Activated T-helper 1 cell treated with anti-CD3 and anti-CD28 coated beads, Interleukin-12 subunit alpha, Interleukin-12 subunit beta, Interleukin-2, Interleukin-4 antibody, amounts not matched to agents 30 ng/mL and 10 ng/mL and 1 ng/mL, durations not matched to agents 14 hours and 24 hours and 36 hours (primary cell): ENCODE measurements at regions of chr11 and their contacts with region 1.

Region 1: GRCh38 chr11:17354601-17354991 is 3.0 kb downstream of the NCR3LG1 start:
- DNase-seq: peak; percentile 56
- H3K4me3 Mint-ChIP-seq: peak overlapping the region; percentile 73
- H3K27ac Mint-ChIP-seq: peak overlapping the region; percentile 73
- H3K4me1 Mint-ChIP-seq: peaks cover 40% of the 10 kb centered on the region
- H3K27me3 Mint-ChIP-seq: peaks cover 43% of the 10 kb centered on the region

Region 2: GRCh38 chr11:17207317-17208258 is 147.0 kb before region 1 on chr11 and contains the start of gene PIK3C2A:
- intact Hi-C with region 1: loop called (anchors 1 kb)
- DNase-seq: peak; percentile 93
- H3K4me3 Mint-ChIP-seq: peak within 1 kb of the TSS; percentile 98
- H3K27ac Mint-ChIP-seq: peak within 1 kb of the TSS; percentile 94
- H3K4me1 Mint-ChIP-seq: peaks cover 35% of the 10 kb centered on the region
- H3K27me3 Mint-ChIP-seq: no peaks in the 10 kb centered on the region
- total RNA-seq, gene PIK3C2A: 31.7 and 31.8 TPM in 2 replicates

Region 3: DNA sequence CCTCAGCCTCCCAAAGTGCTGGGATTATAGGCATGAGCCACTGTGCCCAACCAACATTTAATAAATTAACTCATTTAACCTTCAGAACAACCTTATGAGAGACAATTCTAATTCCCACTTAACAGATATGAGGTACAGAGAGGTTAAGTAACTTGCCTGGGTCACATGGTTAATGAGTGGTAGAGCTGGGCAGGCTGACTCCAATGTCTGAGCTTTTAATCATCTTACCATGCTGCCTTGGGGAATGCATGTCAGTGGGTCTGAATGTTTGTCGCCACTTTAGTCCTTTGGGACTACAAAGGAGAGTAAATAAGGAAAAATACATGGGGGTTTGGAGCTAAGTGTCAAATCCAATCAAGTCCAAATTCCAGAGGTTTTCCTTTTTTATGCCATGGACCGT is 135.6 kb before region 1 on chr11:
- intact Hi-C with region 1: no loop called
- DNase-seq: no peak
- H3K4me3 Mint-ChIP-seq: no peak overlapping the region
- H3K27ac Mint-ChIP-seq: no peak overlapping the region
- H3K4me1 Mint-ChIP-seq: no peaks in the 10 kb centered on the region
- H3K27me3 Mint-ChIP-seq: peaks cover 24% of the 10 kb centered on the region

Region 4: DNA sequence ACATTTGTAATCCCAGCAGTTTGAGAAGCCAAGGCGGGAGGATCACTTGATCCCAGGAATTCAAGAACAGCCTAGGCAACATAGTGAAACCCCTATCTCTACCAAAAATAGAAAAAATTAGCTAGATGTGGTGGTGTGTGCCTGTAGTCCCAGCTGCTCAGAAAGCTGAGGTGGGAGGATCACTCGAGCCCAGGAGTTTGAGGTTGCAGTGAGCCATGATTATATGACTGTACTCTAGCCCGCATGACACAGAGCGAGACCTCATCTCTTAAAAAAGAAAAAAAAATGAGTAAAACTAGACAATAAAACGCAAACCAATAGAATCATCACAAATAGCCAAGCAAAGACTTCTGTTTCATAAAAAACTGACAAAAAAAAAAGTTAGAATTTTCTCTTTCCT is 56.3 kb before region 1 on chr11:
- intact Hi-C with region 1: loop called (anchors 1 kb)
- DNase-seq: peak; percentile 23
- H3K4me3 Mint-ChIP-seq: no peak overlapping the region
- H3K27ac Mint-ChIP-seq: peak overlapping the region; percentile 64
- H3K4me1 Mint-ChIP-seq: peaks cover 31% of the 10 kb centered on the region
- H3K27me3 Mint-ChIP-seq: no peaks in the 10 kb centered on the region

Region 5: DNA sequence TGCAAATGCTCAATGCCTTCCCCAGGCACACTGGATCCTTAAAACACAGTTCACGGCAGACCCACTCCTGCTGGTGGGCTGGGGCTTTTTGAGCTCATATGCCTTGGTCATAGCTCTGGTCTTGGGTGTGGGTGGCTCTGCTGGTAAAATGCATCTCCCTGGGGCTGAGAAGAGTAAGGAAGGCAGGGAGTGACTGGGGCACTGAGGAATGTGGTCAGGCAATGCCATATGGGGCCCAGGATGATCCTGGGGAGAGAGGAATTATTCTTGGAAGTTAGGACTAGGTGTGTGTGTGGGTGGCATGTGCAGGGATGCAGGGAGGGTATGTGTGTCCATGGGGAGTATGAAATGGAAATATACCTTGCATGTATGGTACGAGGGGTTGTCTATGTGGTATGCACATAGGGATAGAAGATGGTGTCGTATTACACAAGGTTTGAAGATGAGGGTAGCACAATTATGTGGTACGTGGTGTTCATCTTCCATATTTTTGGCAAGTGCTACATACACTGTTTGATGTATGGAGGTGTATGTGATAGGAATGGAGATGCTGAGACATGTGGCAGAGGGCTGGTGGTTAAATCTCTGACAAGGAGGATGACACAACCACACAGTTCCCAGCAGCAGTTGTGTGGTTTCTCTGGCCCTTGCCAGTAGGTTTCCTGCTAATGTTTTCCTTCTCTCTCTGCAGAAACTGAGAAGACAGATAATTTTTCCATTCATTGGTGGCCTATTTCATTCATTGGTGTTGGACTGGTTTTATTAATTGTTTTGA is 13.8 kb after region 1 on chr11:
- intact Hi-C with region 1: loop called (anchors 1 kb)
- DNase-seq: no peak
- H3K4me3 Mint-ChIP-seq: no peak overlapping the region
- H3K27ac Mint-ChIP-seq: peak overlapping the region; percentile 33
- H3K4me1 Mint-ChIP-seq: peaks cover 19% of the 10 kb centered on the region
- H3K27me3 Mint-ChIP-seq: peaks cover 12% of the 10 kb centered on the region

Region 6: DNA sequence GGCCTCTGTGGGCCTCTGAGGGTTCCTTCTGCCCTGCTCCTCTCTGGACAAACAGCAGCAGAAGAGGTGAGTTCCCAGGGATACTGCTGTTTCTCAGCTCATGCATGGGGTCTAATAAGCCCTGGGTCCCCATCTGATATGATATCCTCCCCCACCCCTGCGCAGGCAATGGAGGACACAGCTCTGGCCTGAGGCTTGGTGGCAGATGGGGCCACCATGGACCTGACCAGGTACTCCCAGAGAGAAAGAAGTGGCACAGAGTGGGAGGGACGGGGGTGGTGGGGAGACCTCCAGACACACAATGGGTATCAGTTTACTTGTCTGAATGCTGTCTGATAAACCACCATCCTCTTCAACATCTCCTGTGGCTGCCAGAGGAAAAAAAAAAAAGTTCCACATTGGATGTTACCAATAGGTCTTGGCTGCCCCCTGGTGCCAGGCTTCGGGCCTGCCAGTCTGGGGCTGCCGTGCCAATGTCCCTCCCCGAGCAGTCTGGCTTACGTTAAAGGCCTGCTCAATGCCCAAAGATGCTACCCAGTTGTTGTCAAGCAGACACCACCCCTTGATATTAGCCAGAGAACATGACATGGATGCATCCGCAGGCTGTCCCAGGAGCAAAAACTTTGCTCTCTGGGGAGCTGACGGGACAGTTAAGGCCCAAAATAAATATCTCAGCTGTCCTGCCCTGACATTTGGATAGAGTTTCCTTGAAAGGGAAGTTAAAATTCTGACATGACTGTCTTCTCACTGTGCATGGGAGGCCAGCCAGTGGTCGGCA is 149.9 kb after region 1 on chr11:
- intact Hi-C with region 1: loop called (anchors 1 kb)
- DNase-seq: peak; percentile 68
- H3K4me3 Mint-ChIP-seq: no peak overlapping the region
- H3K27ac Mint-ChIP-seq: no peak overlapping the region
- H3K4me1 Mint-ChIP-seq: no peaks in the 10 kb centered on the region
- H3K27me3 Mint-ChIP-seq: peaks cover 11% of the 10 kb centered on the region